ENCODE measurements at regions of chr1 and their contacts with region 1.

Region 1: DNA sequence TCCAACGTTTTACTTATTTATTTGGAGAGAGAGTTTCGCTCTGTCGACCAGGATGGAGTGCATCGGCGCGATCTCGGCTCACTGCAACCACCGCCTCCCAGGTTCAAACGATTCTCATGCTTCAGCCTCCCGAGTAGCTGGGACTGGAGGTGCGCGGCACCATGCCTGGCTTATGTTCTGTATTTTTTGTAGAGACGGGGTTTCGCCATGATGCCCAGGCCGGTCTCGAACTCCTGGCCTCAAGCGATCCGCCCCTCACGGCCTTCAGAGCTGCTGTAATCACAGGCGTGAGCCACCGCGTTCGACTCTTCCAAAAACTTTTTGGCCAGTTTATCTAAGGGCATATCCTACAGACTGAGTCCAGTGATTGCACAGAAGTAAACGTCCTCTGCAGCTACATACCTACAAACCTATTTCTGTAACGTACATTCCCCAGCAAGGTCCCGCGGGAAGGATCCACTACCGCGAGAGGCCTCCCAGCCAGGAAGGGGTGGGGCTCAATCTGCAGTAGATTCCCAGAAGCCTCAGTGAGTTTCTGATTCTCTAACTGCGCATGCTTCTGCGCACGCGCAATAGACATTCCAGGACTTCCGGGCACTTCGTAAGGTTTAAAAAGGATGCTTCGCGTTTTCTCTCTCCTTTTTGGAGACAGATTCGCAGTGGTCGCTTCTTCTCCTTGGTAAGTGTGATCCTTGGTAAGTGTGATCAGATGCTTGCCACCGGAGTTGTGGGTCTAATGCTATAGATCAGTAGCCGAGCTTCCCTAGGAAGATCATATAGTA is at the start of gene RCC1:
- DNase-seq: peak; percentile 99
- H3K4me3 Mint-ChIP-seq: peak within 1 kb of the TSS; percentile 95
- H3K27ac Mint-ChIP-seq: peak within 1 kb of the TSS; percentile 98
- H3K4me1 Mint-ChIP-seq: peaks cover 22% of the 10 kb centered on the region
- H3K27me3 Mint-ChIP-seq: no peaks in the 10 kb centered on the region
- CTCF ChIP-seq: no peak
- total RNA-seq, gene RCC1: 30.3 and 42.4 TPM in 2 replicates

Region 2: GRCh38 chr1:27940297-27940696 is 565.3 kb before region 1 on chr1:
- CTCF ChIA-PET with region 1: no interaction called
- POLR2A ChIA-PET with region 1: no interaction called
- intact Hi-C with region 1: no loop called
- DNase-seq: peak; percentile 46
- H3K4me3 Mint-ChIP-seq: no peak overlapping the region
- H3K27ac Mint-ChIP-seq: no peak overlapping the region
- H3K4me1 Mint-ChIP-seq: peaks cover 7% of the 10 kb centered on the region
- H3K27me3 Mint-ChIP-seq: no peaks in the 10 kb centered on the region
- CTCF ChIP-seq: no peak

Region 3: GRCh38 chr1:28176492-28177470 is 328.8 kb before region 1 on chr1 and contains the start of gene PTAFR:
- CTCF ChIA-PET with region 1: no interaction called
- POLR2A ChIA-PET with region 1: no interaction called
- intact Hi-C with region 1: no loop called
- DNase-seq: no peak
- H3K4me3 Mint-ChIP-seq: no peak within 1 kb of the TSS
- H3K27ac Mint-ChIP-seq: no peak within 1 kb of the TSS
- H3K4me1 Mint-ChIP-seq: peaks cover 9% of the 10 kb centered on the region
- H3K27me3 Mint-ChIP-seq: no peaks in the 10 kb centered on the region
- CTCF ChIP-seq: no peak
- total RNA-seq, gene PTAFR: 1.6 and 1.8 TPM in 2 replicates

Region 4: GRCh38 chr1:28409090-28409489 is 96.5 kb before region 1 on chr1:
- CTCF ChIA-PET with region 1: interaction called, 8 read pairs
- POLR2A ChIA-PET with region 1: interaction called, 74 read pairs
- intact Hi-C with region 1: loop called (anchors 2 kb)
- DNase-seq: no peak
- H3K4me3 Mint-ChIP-seq: no peak overlapping the region
- H3K27ac Mint-ChIP-seq: no peak overlapping the region
- H3K4me1 Mint-ChIP-seq: no peaks in the 10 kb centered on the region
- H3K27me3 Mint-ChIP-seq: no peaks in the 10 kb centered on the region
- CTCF ChIP-seq: no peak

Region 5: DNA sequence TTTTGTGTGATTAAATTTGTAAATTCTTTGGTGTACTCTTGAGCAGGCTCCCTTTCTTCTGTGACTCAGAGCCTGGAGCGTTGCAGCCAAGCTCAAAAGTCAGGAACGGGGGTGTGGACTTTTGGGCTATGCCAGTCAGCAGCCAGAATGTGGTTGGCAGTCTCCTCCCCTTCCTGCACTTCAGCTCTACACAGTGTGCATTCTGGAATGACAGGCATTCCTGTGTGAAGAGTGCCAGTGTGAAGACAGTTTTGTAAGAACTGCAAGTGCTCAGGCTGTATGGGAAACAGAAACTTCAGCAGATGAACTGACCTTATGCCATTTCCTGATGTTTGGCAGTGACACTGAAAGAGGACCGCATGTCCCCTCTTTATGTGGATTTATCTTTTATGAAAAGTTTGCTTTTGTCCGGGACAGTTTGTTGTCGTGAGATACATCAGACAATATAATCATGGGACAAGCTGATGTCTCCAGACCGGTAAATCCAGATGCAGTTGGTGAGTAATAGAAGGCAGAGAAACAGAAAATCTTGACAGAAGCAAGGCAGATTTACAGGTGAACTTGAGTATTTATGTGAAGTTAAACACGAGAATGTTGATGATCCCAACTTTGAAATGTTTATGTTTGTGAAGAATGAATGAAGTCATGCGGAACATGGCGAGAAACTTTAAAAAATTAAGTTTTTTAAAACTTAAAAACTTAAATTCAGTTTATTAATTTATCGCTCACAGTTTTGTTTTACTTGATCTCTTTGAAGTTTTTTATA is 67.5 kb before region 1 on chr1:
- CTCF ChIA-PET with region 1: no interaction called
- POLR2A ChIA-PET with region 1: interaction called, 237 read pairs
- intact Hi-C with region 1: no loop called
- DNase-seq: peak; percentile 98
- H3K4me3 Mint-ChIP-seq: peak overlapping the region; percentile 89
- H3K27ac Mint-ChIP-seq: peak overlapping the region; percentile 93
- H3K4me1 Mint-ChIP-seq: peaks cover 21% of the 10 kb centered on the region
- H3K27me3 Mint-ChIP-seq: no peaks in the 10 kb centered on the region
- CTCF ChIP-seq: no peak

Region 6: GRCh38 chr1:28518000-28518744 is 12.6 kb after region 1 on chr1:
- CTCF ChIA-PET with region 1: interaction called, 7 read pairs
- POLR2A ChIA-PET with region 1: interaction called, 37 read pairs
- intact Hi-C with region 1: no loop called
- DNase-seq: peak; percentile 89
- H3K4me3 Mint-ChIP-seq: peak overlapping the region; percentile 69
- H3K27ac Mint-ChIP-seq: peak overlapping the region; percentile 75
- H3K4me1 Mint-ChIP-seq: peaks cover 29% of the 10 kb centered on the region
- H3K27me3 Mint-ChIP-seq: no peaks in the 10 kb centered on the region
- CTCF ChIP-seq: peak; percentile 93

Region 7: GRCh38 chr1:28642847-28643635 is 137.4 kb after region 1 on chr1 and contains the start of gene TAF12:
- CTCF ChIA-PET with region 1: no interaction called
- POLR2A ChIA-PET with region 1: interaction called, 48 read pairs
- intact Hi-C with region 1: no loop called
- DNase-seq: peak; percentile 95
- H3K4me3 Mint-ChIP-seq: peak within 1 kb of the TSS; percentile 100
- H3K27ac Mint-ChIP-seq: peak within 1 kb of the TSS; percentile 98
- H3K4me1 Mint-ChIP-seq: peaks cover 18% of the 10 kb centered on the region
- H3K27me3 Mint-ChIP-seq: no peaks in the 10 kb centered on the region
- CTCF ChIP-seq: peak; percentile 31
- total RNA-seq, gene TAF12: 29.7 and 40.9 TPM in 2 replicates